ENCODE measurements at regions of chr17 and their contacts with region 1.

Region 1: DNA sequence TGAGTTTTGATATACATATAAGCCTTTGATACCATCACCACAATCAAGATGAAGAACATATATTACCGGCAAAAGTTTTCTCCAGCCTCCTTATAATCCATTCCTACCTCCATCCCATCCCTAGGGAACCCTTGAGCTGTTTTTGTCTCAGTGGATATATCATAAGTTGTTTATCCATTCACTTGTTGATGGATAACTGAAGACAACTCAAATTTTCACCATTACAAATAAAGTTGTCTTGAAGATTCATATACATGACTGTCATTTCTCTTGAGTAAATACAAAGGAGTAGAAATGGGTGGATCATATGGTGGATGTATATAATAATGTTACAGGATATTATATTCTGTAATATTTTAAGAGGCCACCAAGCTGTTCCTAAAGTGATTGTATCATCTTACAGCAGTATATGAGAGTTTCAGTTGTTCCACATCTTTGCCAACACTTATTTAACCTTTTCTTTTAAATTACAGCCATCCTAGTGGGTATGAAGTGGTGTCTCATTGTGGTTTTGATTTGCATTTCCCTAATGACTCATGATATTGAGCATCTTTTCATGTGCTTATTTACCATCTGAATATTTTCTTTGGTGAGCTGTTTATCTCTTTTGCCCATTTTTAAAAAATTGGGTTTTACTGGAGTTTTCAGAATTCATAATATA is 17.4 kb downstream of the NF1 start:
- DNase-seq: no peak
- ATAC-seq: no peak
- H3K4me3 ChIP-seq: no peak overlapping the region
- H3K27ac ChIP-seq: no peak overlapping the region
- H3K4me1 ChIP-seq: peaks cover 0 to 26% (median 10%) of the 10 kb centered on the region in 9 donors
- H3K27me3 ChIP-seq: no peaks in the 10 kb centered on the region
- CTCF ChIP-seq: no peak

Region 2: GRCh38 chr17:31167111-31167510 is 55.0 kb after region 1 on chr17:
- intact Hi-C with region 1: loop called in 1 of 10 experiments (anchors 5 kb)
- DNase-seq: no peak
- ATAC-seq: peak in 7 of 8 donors; percentile 42 to 90 (median 80)
- H3K4me3 ChIP-seq: no peak overlapping the region
- H3K27ac ChIP-seq: peak overlapping the region in 6 of 10 donors; percentile 46 to 64 (median 54)
- H3K4me1 ChIP-seq: peaks cover 0 to 4% (median 0%) of the 10 kb centered on the region in 9 donors
- H3K27me3 ChIP-seq: no peaks in the 10 kb centered on the region
- CTCF ChIP-seq: no peak

Measured in heart right ventricle (tissue), 16 donors.